CD8-positive, alpha-beta memory T cell (primary cell): ENCODE measurements at regions of chr1 and their contacts with region 1.

Region 1: DNA sequence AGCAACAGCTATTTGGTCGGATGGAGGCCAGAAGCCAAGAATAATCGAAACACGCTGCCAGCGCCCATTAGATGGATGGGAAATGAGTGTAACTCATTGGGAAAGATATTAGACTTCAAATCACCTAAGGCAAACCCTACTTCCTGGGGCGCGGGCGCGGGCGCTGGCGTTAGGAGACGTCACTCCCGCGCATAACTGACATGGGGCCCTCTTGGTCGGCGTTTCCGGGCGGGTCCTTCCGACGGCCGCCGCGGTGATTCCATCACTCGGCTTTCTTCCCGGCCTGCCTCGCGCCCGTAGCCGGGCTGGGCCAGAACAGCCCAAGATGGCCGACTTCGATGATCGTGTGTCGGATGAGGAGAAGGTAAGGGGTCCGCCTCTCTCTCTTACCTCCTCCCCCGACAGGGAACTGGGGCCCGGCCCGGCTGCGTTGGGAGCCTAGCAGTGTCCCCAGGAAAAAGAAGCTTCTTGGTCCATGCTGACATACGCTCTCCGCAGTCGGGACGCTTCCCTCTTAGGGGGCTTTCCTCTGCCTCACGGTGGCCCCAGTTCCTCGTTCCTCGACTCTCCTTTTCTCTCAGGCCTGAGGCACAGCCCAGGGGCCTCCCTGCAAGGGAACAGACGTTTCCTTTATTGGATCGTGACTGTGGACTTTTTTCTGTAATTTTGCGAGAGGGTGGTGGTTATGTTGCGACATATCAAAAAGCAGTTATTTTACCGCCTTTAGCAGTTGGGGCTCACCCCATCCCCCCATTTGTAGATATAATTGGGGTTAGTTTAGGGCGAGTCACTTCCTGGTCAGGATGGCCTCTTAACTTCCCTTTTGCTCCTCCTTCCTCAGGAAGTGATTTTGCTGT is at the start of gene CAPZA1:
- DNase-seq: peak; percentile 85 to 95 (median 92)
- H3K4me3 ChIP-seq: peak within 1 kb of the TSS; percentile 100
- H3K4me3 Mint-ChIP-seq: peak within 1 kb of the TSS; percentile 96 to 100 (median 99)
- H3K27ac ChIP-seq: peak within 1 kb of the TSS; percentile 99
- H3K27ac Mint-ChIP-seq: peak within 1 kb of the TSS; percentile 97 to 100 (median 100)
- H3K4me1 ChIP-seq: peaks cover 44% of the 10 kb centered on the region
- H3K4me1 Mint-ChIP-seq: peaks cover 41 to 59% (median 54%) of the 10 kb centered on the region in 3 donors
- H3K27me3 ChIP-seq: no peaks in the 10 kb centered on the region
- H3K27me3 Mint-ChIP-seq: peaks cover 0 to 8% of the 10 kb centered on the region in 2 donors
- total RNA-seq, gene CAPZA1: 255 to 266 TPM

Region 2: GRCh38 chr1:112395821-112396652 is 223.7 kb before region 1 on chr1 and contains the start of gene CTTNBP2NL:
- CTCF ChIA-PET with region 1: interaction called, 6 read pairs
- POLR2A ChIA-PET with region 1: interaction called, 10 read pairs
- DNase-seq: peak; percentile 65 to 83 (median 76)
- H3K4me3 ChIP-seq: peak within 1 kb of the TSS; percentile 64
- H3K4me3 Mint-ChIP-seq: peak within 1 kb of the TSS; percentile 80 to 98 (median 94)
- H3K27ac ChIP-seq: peak within 1 kb of the TSS; percentile 29
- H3K27ac Mint-ChIP-seq: peak within 1 kb of the TSS in 6 of 8 donors; percentile 27 to 87 (median 64)
- H3K4me1 ChIP-seq: peaks cover 16% of the 10 kb centered on the region
- H3K4me1 Mint-ChIP-seq: peaks cover 15 to 22% (median 21%) of the 10 kb centered on the region in 3 donors
- H3K27me3 ChIP-seq: no peaks in the 10 kb centered on the region
- H3K27me3 Mint-ChIP-seq: peaks cover 22 to 30% of the 10 kb centered on the region in 2 donors
- total RNA-seq, gene CTTNBP2NL: 2.3 to 2.5 TPM

Region 3: DNA sequence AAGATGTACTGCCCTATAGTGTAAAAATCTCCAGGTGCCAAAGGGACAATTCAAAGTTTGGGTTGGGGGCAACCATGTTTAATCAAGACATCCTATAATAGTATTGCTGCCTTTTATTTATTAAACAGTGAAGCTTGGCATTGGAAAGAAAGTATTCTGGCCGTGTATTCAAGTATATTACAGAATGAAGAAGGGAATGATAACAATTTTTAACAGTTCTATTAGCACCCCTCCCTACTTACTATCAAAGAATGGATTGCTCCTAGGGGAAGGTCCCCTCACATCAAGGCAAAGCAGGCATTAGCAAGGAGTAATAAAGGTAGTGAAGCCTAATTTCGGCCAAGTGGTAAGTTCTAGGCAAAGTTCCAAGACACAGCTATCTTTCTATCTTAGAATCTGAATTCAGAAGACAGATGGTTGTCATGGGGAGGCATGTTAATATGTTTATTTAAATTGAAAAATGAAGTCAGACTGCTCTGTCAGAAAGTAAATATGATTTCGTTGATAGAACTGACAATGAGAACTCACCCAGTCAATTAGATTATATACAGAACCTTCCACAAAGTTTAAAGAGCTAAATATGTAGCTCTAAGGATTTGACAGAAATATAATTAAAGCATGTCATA is 25.4 kb before region 1 on chr1:
- CTCF ChIA-PET with region 1: no interaction called
- POLR2A ChIA-PET with region 1: no interaction called
- DNase-seq: no peak
- H3K4me3 ChIP-seq: no peak overlapping the region
- H3K4me3 Mint-ChIP-seq: no peak overlapping the region
- H3K27ac ChIP-seq: no peak overlapping the region
- H3K27ac Mint-ChIP-seq: peak overlapping the region in 1 of 8 donors; percentile 7
- H3K4me1 ChIP-seq: no peaks in the 10 kb centered on the region
- H3K4me1 Mint-ChIP-seq: no peaks in the 10 kb centered on the region
- H3K27me3 ChIP-seq: no peaks in the 10 kb centered on the region
- H3K27me3 Mint-ChIP-seq: no peaks in the 10 kb centered on the region

Region 4: GRCh38 chr1:112674439-112674985 is 54.8 kb after region 1 on chr1 and contains the start of gene MOV10:
- CTCF ChIA-PET with region 1: interaction called, 11 read pairs
- POLR2A ChIA-PET with region 1: interaction called, 32 read pairs
- DNase-seq: peak; percentile 48 to 77 (median 64)
- H3K4me3 ChIP-seq: peak within 1 kb of the TSS; percentile 79
- H3K4me3 Mint-ChIP-seq: peak within 1 kb of the TSS; percentile 81 to 99 (median 97)
- H3K27ac ChIP-seq: peak within 1 kb of the TSS; percentile 81
- H3K27ac Mint-ChIP-seq: peak within 1 kb of the TSS; percentile 61 to 98 (median 94)
- H3K4me1 ChIP-seq: peaks cover 24% of the 10 kb centered on the region
- H3K4me1 Mint-ChIP-seq: peaks cover 45 to 58% (median 52%) of the 10 kb centered on the region in 3 donors
- H3K27me3 ChIP-seq: no peaks in the 10 kb centered on the region
- H3K27me3 Mint-ChIP-seq: no peaks in the 10 kb centered on the region
- total RNA-seq, gene MOV10: 29.9 to 31.0 TPM